ENCODE measurements at regions of chr22 and their contacts with region 1.

Region 1: GRCh38 chr22:42933481-42934091 is 76.5 kb upstream of the ARFGAP3 start:
- DNase-seq: peak; percentile 90
- H3K4me3 ChIP-seq: peak overlapping the region in 2 of 3 experiments; percentile 22 to 25
- H3K27ac ChIP-seq: peak overlapping the region; percentile 98
- H3K4me1 ChIP-seq: peaks cover 66% of the 10 kb centered on the region
- H3K27me3 ChIP-seq: no peaks in the 10 kb centered on the region
- CTCF ChIP-seq: no peak

Region 2: GRCh38 chr22:42856865-42857704 is 76.5 kb before region 1 on chr22 and contains the start of gene ARFGAP3:
- CTCF ChIA-PET with region 1: no interaction called
- dilution Hi-C with region 1: no loop called
- in situ Hi-C with region 1: no loop called
- intact Hi-C with region 1: loop called (anchors 5 kb)
- DNase-seq: peak; percentile 90
- H3K4me3 ChIP-seq: peak within 1 kb of the TSS; percentile 88 to 99 (median 98)
- H3K27ac ChIP-seq: peak within 1 kb of the TSS; percentile 87
- H3K4me1 ChIP-seq: peaks cover 5% of the 10 kb centered on the region
- H3K27me3 ChIP-seq: no peaks in the 10 kb centered on the region
- CTCF ChIP-seq: no peak
- total RNA-seq, gene ARFGAP3: 46.5 to 60.8 TPM

Region 3: GRCh38 chr22:42967933-42968332 is 34.3 kb after region 1 on chr22:
- CTCF ChIA-PET with region 1: no interaction called
- dilution Hi-C with region 1: no loop called
- in situ Hi-C with region 1: no loop called
- intact Hi-C with region 1: loop called (anchors 2 kb)
- DNase-seq: no peak
- H3K4me3 ChIP-seq: no peak overlapping the region
- H3K27ac ChIP-seq: no peak overlapping the region
- H3K4me1 ChIP-seq: peaks cover 22% of the 10 kb centered on the region
- H3K27me3 ChIP-seq: no peaks in the 10 kb centered on the region
- CTCF ChIP-seq: no peak

Measured in mammary epithelial cell (primary cell).